ENCODE measurements at regions of chr6 and their contacts with region 1.

Region 1: DNA sequence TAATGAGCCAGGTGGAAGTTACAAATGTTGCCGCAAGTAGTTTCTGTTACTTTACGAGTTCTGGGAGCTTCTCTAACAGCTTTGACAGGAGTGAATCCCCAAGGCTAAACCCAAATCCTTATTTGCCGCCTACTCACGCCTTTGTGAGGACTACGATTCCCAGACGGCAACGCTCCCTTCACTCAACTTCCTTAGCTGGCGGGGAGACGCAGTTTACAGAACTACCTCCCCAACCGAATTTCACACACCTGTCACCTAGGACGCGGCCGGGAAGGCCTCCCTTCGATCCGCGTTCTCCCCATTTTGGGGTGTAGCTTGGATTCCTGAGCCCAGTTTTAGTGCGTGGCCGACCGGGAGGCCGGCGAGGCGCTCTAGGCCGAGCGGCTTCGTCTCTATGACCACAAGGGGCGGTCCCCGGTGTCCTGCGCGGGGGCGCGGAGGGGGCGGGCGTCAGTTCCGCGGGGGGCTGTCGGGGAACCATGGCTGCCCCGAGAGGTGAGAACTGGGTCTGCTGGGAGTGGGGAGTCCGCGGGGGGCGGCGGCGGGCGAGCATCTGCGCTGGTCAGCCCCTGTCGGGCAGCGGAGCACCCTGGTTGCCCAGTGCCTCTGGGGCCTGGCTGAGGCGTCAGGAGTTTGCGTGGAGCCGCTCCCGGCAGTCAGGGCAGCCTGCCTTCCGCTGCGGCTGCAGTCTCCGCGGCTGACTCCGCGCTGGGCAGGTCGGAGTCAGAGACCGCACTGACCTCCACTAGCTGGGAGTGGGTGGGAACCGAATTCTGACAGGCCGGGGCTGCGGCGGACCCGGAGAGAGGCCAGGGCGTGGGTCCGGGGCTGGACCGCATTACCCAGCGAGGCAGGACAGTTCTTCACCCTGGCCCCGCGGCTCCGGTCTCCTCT is at the start of gene SLC35A1:
- DNase-seq: peak; percentile 88
- ATAC-seq: peak; percentile 99 to 100 (median 99)
- H3K4me3 ChIP-seq: peak within 1 kb of the TSS; percentile 55 to 94 (median 86)
- H3K27ac ChIP-seq: peak within 1 kb of the TSS; percentile 74 to 99 (median 95)
- H3K4me1 ChIP-seq: peaks cover 2 to 13% (median 9%) of the 10 kb centered on the region in 9 donors
- H3K27me3 ChIP-seq: peaks cover 0 to 4% (median 0%) of the 10 kb centered on the region in 7 donors
- CTCF ChIP-seq: peak in 8 of 9 donors; percentile 6 to 34 (median 28)
- total RNA-seq, gene SLC35A1: 7.0 to 13.2 (median 9.7) TPM

Region 2: GRCh38 chr6:87322304-87323212 is 150.2 kb before region 1 on chr6 and contains the start of gene SMIM8:
- intact Hi-C with region 1: loop called in 2 of 10 experiments (anchors 5 to 10 kb)
- DNase-seq: peak; percentile 81 to 87
- ATAC-seq: peak; percentile 99 to 100 (median 100)
- H3K4me3 ChIP-seq: peak within 1 kb of the TSS; percentile 63 to 98 (median 88)
- H3K27ac ChIP-seq: peak within 1 kb of the TSS; percentile 1 to 90 (median 84)
- H3K4me1 ChIP-seq: peaks cover 0 to 8% (median 3%) of the 10 kb centered on the region in 9 donors
- H3K27me3 ChIP-seq: peaks cover 0 to under 1% (median 0%) of the 10 kb centered on the region in 7 donors
- CTCF ChIP-seq: peak; percentile 96 to 100 (median 99)
- total RNA-seq, gene SMIM8: 8.6 to 13.8 (median 10.8) TPM

Region 3: DNA sequence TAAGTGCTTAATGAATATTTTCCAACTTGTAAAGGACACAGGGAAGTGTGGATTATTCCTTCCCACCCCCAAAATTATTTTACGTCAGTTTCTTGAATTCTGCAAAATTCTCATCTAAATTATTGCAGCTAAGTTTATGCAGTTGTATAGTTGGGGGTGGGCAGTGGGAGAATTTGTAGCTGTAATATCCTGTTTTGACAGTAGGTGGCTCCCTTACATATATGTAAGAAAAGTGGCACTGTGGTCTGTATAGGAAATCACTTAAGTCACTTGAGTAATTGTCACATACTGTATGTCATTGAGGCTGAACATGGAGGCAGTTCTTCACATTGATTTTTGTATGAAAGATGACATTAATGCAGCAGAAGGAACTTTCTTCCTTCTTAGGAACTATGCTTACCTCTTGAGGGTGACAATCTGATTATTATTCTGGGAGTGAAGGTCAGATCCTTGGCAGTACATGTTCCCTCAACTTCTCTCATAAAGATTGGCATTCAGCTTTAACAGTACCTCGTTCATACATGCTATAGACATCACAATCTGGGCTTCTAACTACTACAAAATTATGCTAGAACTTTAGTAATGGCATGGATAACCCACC is 79.7 kb before region 1 on chr6:
- intact Hi-C with region 1: loop called in 1 of 10 experiments (anchors 5 kb)
- DNase-seq: peak in 1 of 2 donors; percentile 30
- ATAC-seq: peak in 6 of 8 donors; percentile 64 to 83 (median 78)
- H3K4me3 ChIP-seq: no peak overlapping the region
- H3K27ac ChIP-seq: no peak overlapping the region
- H3K4me1 ChIP-seq: peaks cover 0 to 3% (median 0%) of the 10 kb centered on the region in 9 donors
- H3K27me3 ChIP-seq: no peaks in the 10 kb centered on the region
- CTCF ChIP-seq: peak; percentile 58 to 82 (median 77)

Region 4: GRCh38 chr6:87407901-87408720 is 64.7 kb before region 1 on chr6 and contains the start of gene CFAP206:
- intact Hi-C with region 1: loop called in 2 of 10 experiments (anchors 5 kb)
- DNase-seq: peak; percentile 79 to 82
- ATAC-seq: peak; percentile 93 to 99 (median 96)
- H3K4me3 ChIP-seq: peak within 1 kb of the TSS; percentile 78 to 99 (median 90)
- H3K27ac ChIP-seq: peak within 1 kb of the TSS in 9 of 10 donors; percentile 71 to 88 (median 83)
- H3K4me1 ChIP-seq: peaks cover 0 to 15% (median 0%) of the 10 kb centered on the region in 9 donors
- H3K27me3 ChIP-seq: no peaks in the 10 kb centered on the region
- CTCF ChIP-seq: peak in 3 of 9 donors; percentile 14 to 33 (median 30)
- total RNA-seq, gene CFAP206: 0.18 to 0.54 (median 0.28) TPM in 5 of 10 donors, not detected in the others

Region 5: GRCh38 chr6:87414329-87414728 is 58.4 kb before region 1 on chr6:
- intact Hi-C with region 1: loop called in 2 of 10 experiments (anchors 5 kb)
- DNase-seq: no peak
- ATAC-seq: no peak
- H3K4me3 ChIP-seq: no peak overlapping the region
- H3K27ac ChIP-seq: no peak overlapping the region
- H3K4me1 ChIP-seq: no peaks in the 10 kb centered on the region
- H3K27me3 ChIP-seq: peaks cover 0 to 3% (median 0%) of the 10 kb centered on the region in 7 donors
- CTCF ChIP-seq: no peak

Region 6: GRCh38 chr6:87426789-87427188 is 46.0 kb before region 1 on chr6:
- intact Hi-C with region 1: no loop called
- DNase-seq: no peak
- ATAC-seq: no peak
- H3K4me3 ChIP-seq: no peak overlapping the region
- H3K27ac ChIP-seq: no peak overlapping the region
- H3K4me1 ChIP-seq: no peaks in the 10 kb centered on the region
- H3K27me3 ChIP-seq: no peaks in the 10 kb centered on the region
- CTCF ChIP-seq: no peak

Region 7: DNA sequence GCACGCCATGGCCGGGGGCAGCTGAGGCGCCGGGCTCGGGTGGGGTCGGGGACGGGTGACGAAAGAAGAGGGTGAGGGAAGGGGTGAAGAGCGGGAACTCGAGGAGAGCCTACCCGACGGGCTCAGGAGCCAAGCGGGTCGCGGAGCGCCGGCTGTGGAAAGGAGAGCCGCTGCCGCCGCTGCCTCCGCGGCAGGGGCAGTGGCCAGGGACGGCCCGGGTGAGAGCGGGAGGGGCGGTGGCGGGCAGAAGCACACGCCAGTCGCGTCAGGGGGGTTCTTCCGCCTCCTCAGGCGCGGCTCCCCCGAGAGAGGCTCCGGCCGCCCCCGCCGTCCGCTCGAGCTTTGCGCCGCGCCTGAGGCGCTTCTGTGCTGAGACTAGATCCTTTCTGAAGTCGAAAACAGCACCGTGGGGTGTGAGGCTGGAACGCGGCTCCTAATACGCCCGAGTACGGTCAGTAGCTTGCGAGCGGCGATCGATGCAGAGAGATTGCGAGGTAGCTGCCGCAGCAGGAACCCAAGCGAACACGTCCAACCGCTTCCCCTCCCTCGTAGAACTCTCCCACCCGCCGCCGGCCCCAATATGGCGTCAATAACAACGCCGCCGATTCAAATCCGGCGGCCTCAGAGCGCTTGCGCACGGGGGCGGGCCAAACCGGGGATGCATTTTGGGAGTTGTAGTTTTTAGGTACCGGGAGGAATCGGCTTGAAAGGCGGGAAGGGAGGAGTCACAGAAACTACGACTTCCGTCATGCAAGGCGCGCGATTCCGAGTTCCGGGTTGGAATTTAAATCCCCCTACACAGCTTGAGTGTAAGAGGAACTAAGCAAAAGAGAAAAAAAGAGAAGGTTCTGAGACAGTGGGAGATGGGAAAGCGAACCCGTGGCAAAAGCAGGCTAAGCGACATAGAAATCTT is 229.2 kb after region 1 on chr6 and contains the start of gene AKIRIN2:
- intact Hi-C with region 1: loop called in 1 of 10 experiments (anchors 10 kb)
- DNase-seq: peak; percentile 96 to 97
- ATAC-seq: peak; percentile 94 to 98 (median 96)
- H3K4me3 ChIP-seq: peak within 1 kb of the TSS; percentile 77 to 99 (median 94)
- H3K27ac ChIP-seq: peak within 1 kb of the TSS; percentile 90 to 99 (median 98)
- H3K4me1 ChIP-seq: peaks cover 0 to 45% (median 34%) of the 10 kb centered on the region in 9 donors
- H3K27me3 ChIP-seq: no peaks in the 10 kb centered on the region
- CTCF ChIP-seq: no peak
- total RNA-seq, gene AKIRIN2: 33.9 to 56.0 (median 43.8) TPM

Measured in heart right ventricle (tissue), 16 donors.